T-cell (primary cell): ENCODE measurements at regions of chr10 and their contacts with region 1.

Region 1: DNA sequence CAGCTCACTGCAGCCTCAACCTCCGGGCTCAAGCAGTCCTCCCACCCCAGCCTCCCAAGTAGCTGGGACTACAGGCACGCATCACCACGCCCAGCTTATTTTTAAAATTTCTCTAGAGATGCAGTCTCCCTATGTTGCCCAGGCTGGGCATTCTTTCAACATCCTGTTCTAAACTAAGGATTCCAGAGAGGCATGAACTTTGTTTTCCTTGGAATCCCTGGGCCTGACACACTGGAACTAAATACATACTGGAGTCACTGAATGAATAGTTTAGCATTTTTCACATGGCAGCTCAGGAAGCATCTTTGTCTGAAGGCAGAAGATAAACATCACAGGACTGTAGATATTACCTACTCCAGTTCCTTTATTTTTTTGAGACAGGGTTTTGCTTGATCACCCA is 108.7 kb downstream of the ITIH5 start:
- DNase-seq: no peak
- ATAC-seq: no peak
- H3K4me3 ChIP-seq: no peak overlapping the region
- H3K4me3 Mint-ChIP-seq: no peak overlapping the region
- H3K27ac ChIP-seq: no peak overlapping the region
- H3K27ac Mint-ChIP-seq: no peak overlapping the region
- H3K4me1 ChIP-seq: no peaks in the 10 kb centered on the region
- H3K4me1 Mint-ChIP-seq: no peaks in the 10 kb centered on the region
- H3K27me3 ChIP-seq: peaks cover 0 to 30% of the 10 kb centered on the region in 2 experiments
- H3K27me3 Mint-ChIP-seq: peaks cover 0 to 18% of the 10 kb centered on the region in 2 donors

Region 2: DNA sequence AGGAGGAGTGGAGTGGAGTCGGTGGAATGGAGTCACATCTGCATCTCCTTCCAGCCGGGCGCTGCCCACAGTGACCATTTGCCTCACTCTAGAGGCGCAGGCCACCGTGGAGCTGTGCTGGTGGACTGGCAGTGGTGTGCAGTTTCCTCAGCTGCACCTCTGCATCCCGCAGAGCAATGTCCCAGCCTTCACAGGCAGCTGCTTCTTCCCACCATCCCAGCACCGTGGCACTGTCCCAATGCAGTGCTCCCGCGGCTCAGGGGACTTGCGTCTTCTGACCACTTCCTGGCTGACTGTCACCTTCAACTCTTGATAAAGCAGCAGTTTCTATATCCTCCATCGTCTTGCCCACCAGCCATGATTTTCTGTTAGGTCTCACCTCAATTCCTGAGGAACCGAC is 56.9 kb before region 1 on chr10:
- CTCF ChIA-PET with region 1: no interaction called
- POLR2A ChIA-PET with region 1: interaction called in 1 of 2 experiments, 11 read pairs
- DNase-seq: peak in 1 of 35 experiments; percentile 26
- ATAC-seq: peak in 3 of 4 experiments; percentile 15 to 58 (median 38)
- H3K4me3 ChIP-seq: no peak overlapping the region
- H3K4me3 Mint-ChIP-seq: peak overlapping the region in 1 of 3 donors; percentile 9
- H3K27ac ChIP-seq: no peak overlapping the region
- H3K27ac Mint-ChIP-seq: no peak overlapping the region
- H3K4me1 ChIP-seq: peaks cover 13 to 14% of the 10 kb centered on the region in 2 experiments
- H3K4me1 Mint-ChIP-seq: peaks cover 19 to 27% (median 25%) of the 10 kb centered on the region in 3 donors
- H3K27me3 ChIP-seq: no peaks in the 10 kb centered on the region
- H3K27me3 Mint-ChIP-seq: no peaks in the 10 kb centered on the region

Region 3: GRCh38 chr10:7533657-7534479 is 24.2 kb before region 1 on chr10:
- CTCF ChIA-PET with region 1: no interaction called
- POLR2A ChIA-PET with region 1: no interaction called
- DNase-seq: no peak
- ATAC-seq: no peak
- H3K4me3 ChIP-seq: no peak overlapping the region
- H3K4me3 Mint-ChIP-seq: no peak overlapping the region
- H3K27ac ChIP-seq: no peak overlapping the region
- H3K27ac Mint-ChIP-seq: no peak overlapping the region
- H3K4me1 ChIP-seq: peaks cover 2 to 4% of the 10 kb centered on the region in 2 experiments
- H3K4me1 Mint-ChIP-seq: peaks cover 2 to 3% (median 3%) of the 10 kb centered on the region in 3 donors
- H3K27me3 ChIP-seq: peaks cover 0 to 19% of the 10 kb centered on the region in 2 experiments
- H3K27me3 Mint-ChIP-seq: peaks cover 7 to 14% of the 10 kb centered on the region in 2 donors

Region 4: GRCh38 chr10:7572391-7572790 is 14.4 kb after region 1 on chr10:
- CTCF ChIA-PET with region 1: no interaction called
- POLR2A ChIA-PET with region 1: no interaction called
- DNase-seq: no peak
- ATAC-seq: no peak
- H3K4me3 ChIP-seq: no peak overlapping the region
- H3K4me3 Mint-ChIP-seq: no peak overlapping the region
- H3K27ac ChIP-seq: no peak overlapping the region
- H3K27ac Mint-ChIP-seq: no peak overlapping the region
- H3K4me1 ChIP-seq: no peaks in the 10 kb centered on the region
- H3K4me1 Mint-ChIP-seq: no peaks in the 10 kb centered on the region
- H3K27me3 ChIP-seq: peaks cover 0 to 2% of the 10 kb centered on the region in 2 experiments
- H3K27me3 Mint-ChIP-seq: peaks cover 2 to 4% of the 10 kb centered on the region in 2 donors

Region 5: DNA sequence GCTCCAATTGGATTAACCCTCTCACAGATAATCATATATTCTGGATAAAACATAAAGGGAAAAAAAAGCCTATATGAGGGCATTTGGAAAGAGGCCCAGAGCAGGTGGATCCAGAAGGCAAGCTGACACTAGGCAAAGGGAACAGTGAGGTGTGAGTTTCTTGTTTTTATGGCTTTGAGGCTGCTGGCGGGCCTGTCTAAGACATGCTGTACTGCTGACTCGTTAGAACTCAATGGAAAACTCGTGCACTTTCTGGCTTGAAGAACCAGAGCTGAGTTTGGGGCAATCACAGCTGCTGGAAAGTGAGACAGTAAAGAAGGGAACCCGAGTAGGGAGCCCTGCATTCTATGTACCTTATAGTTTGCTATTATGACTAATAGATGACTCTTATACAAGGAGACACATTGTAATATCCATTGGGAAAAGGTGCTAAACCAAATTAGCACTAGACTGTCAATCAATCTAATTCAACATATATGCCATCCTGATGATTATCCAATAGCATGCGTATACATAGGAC is 1133.5 kb after region 1 on chr10:
- CTCF ChIA-PET with region 1: no interaction called
- POLR2A ChIA-PET with region 1: no interaction called
- DNase-seq: no peak
- ATAC-seq: no peak
- H3K4me3 ChIP-seq: no peak overlapping the region
- H3K4me3 Mint-ChIP-seq: no peak overlapping the region
- H3K27ac ChIP-seq: no peak overlapping the region
- H3K27ac Mint-ChIP-seq: no peak overlapping the region
- H3K4me1 ChIP-seq: no peaks in the 10 kb centered on the region
- H3K4me1 Mint-ChIP-seq: no peaks in the 10 kb centered on the region
- H3K27me3 ChIP-seq: no peaks in the 10 kb centered on the region
- H3K27me3 Mint-ChIP-seq: no peaks in the 10 kb centered on the region